IMR-90 (cell line): ENCODE measurements at regions of chr13 and their contacts with region 1.

Region 1: GRCh38 chr13:22662771-22663170 is 518.0 kb upstream of the SGCG start:
- DNase-seq: no peak
- ATAC-seq: no peak
- H3K4me3 ChIP-seq: no peak overlapping the region
- H3K27ac ChIP-seq: no peak overlapping the region
- H3K4me1 ChIP-seq: no peaks in the 10 kb centered on the region
- H3K27me3 ChIP-seq: no peaks in the 10 kb centered on the region
- CTCF ChIP-seq: no peak
- POLR2A ChIP-seq: no peak
- RAD21 ChIP-seq: no peak

Region 2: GRCh38 chr13:21733475-21734263 is 929.1 kb before region 1 on chr13:
- CTCF ChIA-PET with region 1: no interaction called
- POLR2A ChIA-PET with region 1: no interaction called
- dilution Hi-C with region 1: no loop called
- in situ Hi-C with region 1: no loop called
- intact Hi-C with region 1: loop called (anchors 5 kb)
- DNase-seq: no peak
- ATAC-seq: no peak
- H3K4me3 ChIP-seq: no peak overlapping the region
- H3K27ac ChIP-seq: no peak overlapping the region
- H3K4me1 ChIP-seq: peaks cover 8% of the 10 kb centered on the region
- H3K27me3 ChIP-seq: peaks cover 12% of the 10 kb centered on the region
- CTCF ChIP-seq: no peak
- POLR2A ChIP-seq: no peak
- RAD21 ChIP-seq: no peak